ENCODE measurements at regions of chr10 and their contacts with region 1.

Region 1: DNA sequence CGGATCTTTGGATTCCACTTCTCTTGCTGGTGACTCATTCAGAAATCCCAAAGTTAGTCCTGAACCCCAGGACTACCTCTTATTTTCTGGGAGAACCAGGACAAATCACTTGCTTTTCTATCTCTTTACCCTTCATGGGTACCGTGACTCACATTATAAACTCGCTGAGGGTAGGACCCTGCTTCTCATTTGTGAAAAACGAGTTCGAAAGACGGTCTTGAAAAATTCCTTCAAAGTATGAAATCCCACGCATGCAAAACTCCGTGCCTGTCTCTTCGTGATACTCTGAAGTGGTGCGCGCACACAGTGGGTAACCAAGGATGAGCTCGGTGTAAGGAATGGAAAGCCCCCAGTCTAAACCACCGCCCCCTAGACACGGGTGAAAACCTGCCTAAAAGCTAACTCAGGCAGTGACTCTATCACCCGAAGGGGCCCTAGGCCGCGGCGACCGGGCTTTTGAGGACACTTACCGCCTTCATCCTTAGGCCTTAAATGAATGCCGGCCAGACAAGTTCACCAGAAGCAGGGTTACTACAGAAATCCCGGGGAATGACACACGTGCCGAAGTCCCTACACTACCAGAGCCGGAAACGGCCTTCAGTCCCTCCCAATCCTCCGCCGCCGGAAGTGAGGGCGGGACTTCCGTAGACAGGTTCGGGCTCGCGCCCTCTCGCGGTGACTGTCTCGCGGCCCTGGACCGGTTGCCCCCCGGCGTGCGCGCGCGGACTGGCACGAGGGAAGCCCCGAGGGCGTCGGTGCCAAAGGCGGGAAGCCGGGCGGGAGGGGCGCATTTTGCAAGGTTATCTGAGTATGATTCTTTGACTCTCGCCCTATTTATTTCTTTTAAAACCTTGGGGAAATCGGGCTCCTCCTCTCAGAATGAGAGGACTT is at the start of gene NOC3L:
- DNase-seq: peak; percentile 98
- ATAC-seq: peak; percentile 98
- H3K4me3 Mint-ChIP-seq: peak within 1 kb of the TSS; percentile 96
- H3K27ac Mint-ChIP-seq: peak within 1 kb of the TSS; percentile 93
- H3K4me1 Mint-ChIP-seq: peaks cover 27% of the 10 kb centered on the region
- H3K27me3 Mint-ChIP-seq: peaks cover 8% of the 10 kb centered on the region
- total RNA-seq, gene NOC3L: 50.7 to 53.7 TPM

Region 2: GRCh38 chr10:93702211-93703001 is 660.2 kb before region 1 on chr10 and contains the start of gene FRA10AC1:
- CTCF ChIA-PET with region 1: no interaction called
- POLR2A ChIA-PET with region 1: no interaction called
- intact Hi-C with region 1: loop called (anchors 1 to 5 kb)
- DNase-seq: peak; percentile 93
- ATAC-seq: peak; percentile 84
- H3K4me3 Mint-ChIP-seq: no peak within 1 kb of the TSS
- H3K27ac Mint-ChIP-seq: no peak within 1 kb of the TSS
- H3K4me1 Mint-ChIP-seq: peaks cover 29% of the 10 kb centered on the region
- H3K27me3 Mint-ChIP-seq: no peaks in the 10 kb centered on the region
- total RNA-seq, gene FRA10AC1: 18.9 to 29.4 TPM

Region 3: GRCh38 chr10:94402015-94402842 is 39.6 kb after region 1 on chr10 and contains the start of gene TBC1D12:
- CTCF ChIA-PET with region 1: no interaction called
- POLR2A ChIA-PET with region 1: interaction called, 6 read pairs
- intact Hi-C with region 1: loop called (anchors 1 to 2 kb)
- DNase-seq: peak; percentile 60
- ATAC-seq: peak; percentile 83
- H3K4me3 Mint-ChIP-seq: peak within 1 kb of the TSS; percentile 58
- H3K27ac Mint-ChIP-seq: no peak within 1 kb of the TSS
- H3K4me1 Mint-ChIP-seq: peaks cover 2% of the 10 kb centered on the region
- H3K27me3 Mint-ChIP-seq: peaks cover 45% of the 10 kb centered on the region
- total RNA-seq, gene TBC1D12: 0.35 to 0.39 TPM

Region 4: GRCh38 chr10:94545391-94546048 is 182.9 kb after region 1 on chr10 and contains the start of gene HELLS:
- CTCF ChIA-PET with region 1: interaction called, 3 read pairs
- POLR2A ChIA-PET with region 1: no interaction called
- intact Hi-C with region 1: loop called (anchors 1 to 5 kb)
- DNase-seq: peak; percentile 88
- ATAC-seq: peak; percentile 86
- H3K4me3 Mint-ChIP-seq: peak within 1 kb of the TSS; percentile 100
- H3K27ac Mint-ChIP-seq: peak within 1 kb of the TSS; percentile 99
- H3K4me1 Mint-ChIP-seq: peaks cover 11% of the 10 kb centered on the region
- H3K27me3 Mint-ChIP-seq: no peaks in the 10 kb centered on the region
- total RNA-seq, gene HELLS: 118 to 154 TPM

Region 5: GRCh38 chr10:94607111-94607510 is 244.5 kb after region 1 on chr10:
- CTCF ChIA-PET with region 1: no interaction called
- POLR2A ChIA-PET with region 1: no interaction called
- intact Hi-C with region 1: loop called (anchors 5 kb)
- DNase-seq: no peak
- ATAC-seq: peak; percentile 93
- H3K4me3 Mint-ChIP-seq: no peak overlapping the region
- H3K27ac Mint-ChIP-seq: peak overlapping the region; percentile 72
- H3K4me1 Mint-ChIP-seq: peaks cover 24% of the 10 kb centered on the region
- H3K27me3 Mint-ChIP-seq: no peaks in the 10 kb centered on the region